CD8-positive, alpha-beta T cell (primary cell): ENCODE measurements at regions of chr3 and their contacts with region 1.

Region 1: GRCh38 chr3:178606129-178606528 is 69.9 kb downstream of the KCNMB2 start:
- DNase-seq: no peak
- ATAC-seq: no peak
- H3K4me3 ChIP-seq: no peak overlapping the region
- H3K4me3 Mint-ChIP-seq: no peak overlapping the region
- H3K27ac ChIP-seq: no peak overlapping the region
- H3K27ac Mint-ChIP-seq: no peak overlapping the region
- H3K4me1 ChIP-seq: no peaks in the 10 kb centered on the region
- H3K4me1 Mint-ChIP-seq: no peaks in the 10 kb centered on the region
- H3K27me3 ChIP-seq: no peaks in the 10 kb centered on the region
- H3K27me3 Mint-ChIP-seq: peaks cover 2% of the 10 kb centered on the region
- CTCF ChIP-seq: no peak

Region 2: DNA sequence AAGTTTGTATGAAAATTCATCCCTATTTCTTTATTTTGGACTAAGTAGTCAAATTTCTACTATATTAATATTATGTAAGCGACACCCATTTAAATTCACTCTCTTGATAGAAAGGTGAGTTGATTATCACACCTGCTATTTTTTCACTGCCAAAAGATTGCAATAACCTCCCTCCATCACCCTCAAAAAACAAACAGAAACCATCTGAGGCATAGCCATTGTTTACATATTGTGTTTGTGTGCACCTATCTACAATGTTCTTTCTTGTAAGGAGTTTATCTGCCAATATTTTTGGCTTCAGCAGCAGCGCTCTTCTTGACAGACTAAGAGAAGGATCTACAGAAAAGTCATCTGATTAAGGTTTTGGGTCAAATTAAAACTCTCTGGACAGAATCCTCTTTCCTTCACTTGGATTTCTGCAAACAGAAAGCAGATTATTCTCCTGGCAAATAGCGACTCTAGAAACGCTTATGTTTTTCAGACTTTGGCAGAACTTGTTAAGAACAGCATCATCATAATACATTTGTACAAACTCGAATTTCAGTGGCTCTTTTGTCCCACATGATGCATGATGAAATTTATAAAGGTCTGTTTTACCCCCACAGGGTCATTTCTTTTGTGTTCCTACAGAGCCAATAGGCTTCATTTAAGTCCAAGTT is 21.3 kb before region 1 on chr3:
- CTCF ChIA-PET with region 1: no interaction called
- POLR2A ChIA-PET with region 1: no interaction called
- intact Hi-C with region 1: loop called in 1 of 2 experiments (anchors 1 kb)
- DNase-seq: no peak
- ATAC-seq: no peak
- H3K4me3 ChIP-seq: no peak overlapping the region
- H3K4me3 Mint-ChIP-seq: no peak overlapping the region
- H3K27ac ChIP-seq: no peak overlapping the region
- H3K27ac Mint-ChIP-seq: no peak overlapping the region
- H3K4me1 ChIP-seq: no peaks in the 10 kb centered on the region
- H3K4me1 Mint-ChIP-seq: no peaks in the 10 kb centered on the region
- H3K27me3 ChIP-seq: no peaks in the 10 kb centered on the region
- H3K27me3 Mint-ChIP-seq: peaks cover under 1% of the 10 kb centered on the region
- CTCF ChIP-seq: no peak